Esophagus squamous epithelium (tissue), 5 donors: ENCODE measurements at regions of chr7 and their contacts with region 1.

Region 1: DNA sequence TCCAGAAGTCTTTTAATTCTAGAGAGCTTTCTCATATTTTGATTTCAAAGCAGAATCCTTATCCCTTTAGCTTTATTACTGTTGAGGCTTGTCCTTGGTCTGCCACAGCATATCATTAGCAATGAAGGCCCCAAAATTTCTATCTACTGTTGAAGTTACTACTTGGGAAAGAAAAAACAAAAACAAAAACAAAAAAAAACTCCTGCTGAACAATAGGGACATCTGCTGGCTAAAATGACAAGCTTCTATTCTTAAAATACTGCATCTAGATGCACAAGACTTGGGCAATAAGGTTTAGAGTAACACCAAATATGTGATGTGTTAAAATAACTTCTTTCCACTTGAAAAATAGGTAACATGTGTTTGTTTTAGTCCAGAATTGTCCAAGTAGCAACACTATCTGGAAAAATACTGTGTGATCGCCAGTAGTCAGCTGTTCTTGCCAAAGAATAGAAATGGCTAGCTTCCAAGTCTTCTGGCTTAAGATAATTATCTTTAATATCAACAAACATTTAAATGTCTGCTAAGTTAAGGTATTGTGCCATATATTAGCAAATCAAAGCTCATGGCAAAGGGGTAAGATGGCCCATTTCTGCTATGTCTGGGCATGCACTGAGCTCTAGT is 3.8 kb upstream of the DMTF1 start:
- DNase-seq: no peak
- H3K4me3 ChIP-seq: no peak overlapping the region
- H3K27ac ChIP-seq: no peak overlapping the region
- H3K4me1 ChIP-seq: peaks cover 0 to 11% (median 4%) of the 10 kb centered on the region in 3 donors
- H3K27me3 ChIP-seq: no peaks in the 10 kb centered on the region
- CTCF ChIP-seq: peak in 5 of 6 experiments; percentile 27 to 53 (median 40)
- POLR2A ChIP-seq: no peak

Region 2: GRCh38 chr7:86932038-86932512 is 216.4 kb before region 1 on chr7:
- intact Hi-C with region 1: loop called (anchors 5 kb)
- DNase-seq: no peak
- H3K4me3 ChIP-seq: no peak overlapping the region
- H3K27ac ChIP-seq: peak overlapping the region in 3 of 4 donors; percentile 1 to 61 (median 7)
- H3K4me1 ChIP-seq: no peaks in the 10 kb centered on the region
- H3K27me3 ChIP-seq: no peaks in the 10 kb centered on the region
- CTCF ChIP-seq: no peak
- POLR2A ChIP-seq: no peak